GM23248 (cell line): ENCODE measurements at regions of chr2 and their contacts with region 1.

Region 1: GRCh38 chr2:19349911-19350677 is 8.3 kb downstream of the OSR1 start:
- DNase-seq: peak; percentile 39
- H3K4me3 ChIP-seq: no peak overlapping the region
- H3K27ac ChIP-seq: no peak overlapping the region
- H3K4me1 ChIP-seq: peaks cover 8% of the 10 kb centered on the region; the same call in 1 of the 2 replicates
- H3K27me3 ChIP-seq: no peaks in the 10 kb centered on the region

Region 2: DNA sequence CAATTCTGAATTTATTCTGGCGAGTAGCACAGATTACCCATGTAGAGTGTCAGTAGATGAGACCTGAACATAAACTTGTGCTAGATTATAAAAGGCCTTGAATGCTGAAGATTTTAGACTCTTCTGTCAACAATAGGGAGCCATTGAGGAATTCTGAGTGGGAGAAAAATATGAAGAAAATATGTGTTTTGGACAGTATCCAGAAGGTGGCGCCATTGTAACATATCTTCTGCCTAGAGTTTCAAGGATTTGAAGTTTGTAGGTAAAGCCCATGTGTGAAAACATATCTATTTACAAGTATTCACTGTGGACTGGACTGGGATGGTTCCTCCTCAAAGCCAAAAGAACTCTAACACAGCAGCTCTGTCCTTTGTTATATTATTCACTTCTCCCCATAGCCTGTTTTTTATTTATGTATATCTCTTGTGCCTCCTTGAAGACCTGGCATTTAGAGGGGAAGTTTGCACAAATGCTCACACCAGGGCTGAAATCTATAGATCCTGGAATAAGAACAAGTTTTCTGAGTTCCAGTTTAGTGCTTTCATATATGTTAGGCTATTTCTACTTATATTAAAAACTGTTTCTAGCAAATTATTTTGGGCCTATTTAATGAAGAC is 914.6 kb before region 1 on chr2:
- in situ Hi-C with region 1: loop called (anchors 10 kb)
- DNase-seq: peak; percentile 70
- H3K4me3 ChIP-seq: no peak overlapping the region
- H3K27ac ChIP-seq: no peak overlapping the region
- H3K4me1 ChIP-seq: peaks cover 36% of the 10 kb centered on the region
- H3K27me3 ChIP-seq: no peaks in the 10 kb centered on the region

Region 3: DNA sequence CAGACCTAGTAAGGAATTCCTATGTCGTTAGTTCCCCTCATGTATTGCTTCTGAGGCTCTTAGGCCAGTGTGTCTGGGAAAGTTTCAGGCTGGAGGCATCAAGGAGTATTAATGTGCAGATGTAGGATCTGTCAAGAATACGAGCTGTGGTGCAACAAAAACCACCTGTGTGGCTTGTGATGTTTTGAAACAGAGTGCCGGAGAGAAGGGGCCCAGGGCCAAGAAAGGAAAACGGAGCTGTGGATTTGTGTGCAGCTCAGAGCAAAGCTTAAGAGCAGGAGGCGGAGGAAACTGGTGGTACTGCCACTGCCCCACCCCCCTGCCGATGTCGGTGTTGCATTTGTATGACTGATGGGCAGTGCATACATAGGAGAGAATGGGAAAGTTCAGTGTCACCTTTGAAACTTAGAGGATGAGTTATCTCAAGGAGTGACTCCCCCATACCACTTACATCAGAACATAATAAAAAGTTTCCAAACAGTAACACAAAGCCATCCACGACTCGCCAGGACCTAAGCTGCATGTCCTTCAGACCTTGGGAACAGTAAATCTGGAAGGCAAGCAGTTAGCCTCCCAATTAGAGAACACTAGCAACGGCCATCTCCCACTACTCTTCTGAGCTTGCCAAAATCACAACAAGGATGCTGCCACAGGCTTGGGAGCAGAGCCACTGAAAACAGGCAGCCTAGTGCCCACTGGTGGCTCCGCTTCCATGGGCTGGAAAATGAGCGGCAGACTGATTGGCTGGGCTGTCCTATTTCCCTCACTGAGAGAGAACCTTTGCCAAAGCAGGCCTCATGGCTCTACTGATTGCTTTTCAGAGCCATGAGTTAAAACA is 608.0 kb before region 1 on chr2:
- in situ Hi-C with region 1: no loop called
- DNase-seq: no peak
- H3K4me3 ChIP-seq: no peak overlapping the region
- H3K27ac ChIP-seq: no peak overlapping the region
- H3K4me1 ChIP-seq: no peaks in the 10 kb centered on the region
- H3K27me3 ChIP-seq: no peaks in the 10 kb centered on the region

Region 4: GRCh38 chr2:18889565-18890332 is 460.3 kb before region 1 on chr2:
- in situ Hi-C with region 1: loop called (anchors 10 kb)
- DNase-seq: no peak
- H3K4me3 ChIP-seq: no peak overlapping the region
- H3K27ac ChIP-seq: no peak overlapping the region
- H3K4me1 ChIP-seq: peaks cover 7% of the 10 kb centered on the region; the same call in 1 of the 2 replicates
- H3K27me3 ChIP-seq: no peaks in the 10 kb centered on the region

Region 5: GRCh38 chr2:19435815-19436214 is 85.7 kb after region 1 on chr2:
- in situ Hi-C with region 1: no loop called
- DNase-seq: peak; percentile 38
- H3K4me3 ChIP-seq: no peak overlapping the region
- H3K27ac ChIP-seq: no peak overlapping the region
- H3K4me1 ChIP-seq: no peaks in the 10 kb centered on the region
- H3K27me3 ChIP-seq: peaks cover 5% of the 10 kb centered on the region; the same call in 1 of the 2 replicates